ENCODE measurements at regions of chr6 and their contacts with region 1.

Region 1: GRCh38 chr6:57316581-57317059 is 810 bp upstream of the PRIM2 start:
- DNase-seq: peak; percentile 23 to 93
- H3K4me3 ChIP-seq: peak overlapping the region; percentile 58 to 70
- H3K27ac ChIP-seq: peak overlapping the region; percentile 49 to 89
- H3K4me1 ChIP-seq: peaks cover 3 to 25% of the 10 kb centered on the region in 2 donors
- H3K27me3 ChIP-seq: no peaks in the 10 kb centered on the region
- CTCF ChIP-seq: peak; percentile 61 to 84 (median 82)

Region 2: DNA sequence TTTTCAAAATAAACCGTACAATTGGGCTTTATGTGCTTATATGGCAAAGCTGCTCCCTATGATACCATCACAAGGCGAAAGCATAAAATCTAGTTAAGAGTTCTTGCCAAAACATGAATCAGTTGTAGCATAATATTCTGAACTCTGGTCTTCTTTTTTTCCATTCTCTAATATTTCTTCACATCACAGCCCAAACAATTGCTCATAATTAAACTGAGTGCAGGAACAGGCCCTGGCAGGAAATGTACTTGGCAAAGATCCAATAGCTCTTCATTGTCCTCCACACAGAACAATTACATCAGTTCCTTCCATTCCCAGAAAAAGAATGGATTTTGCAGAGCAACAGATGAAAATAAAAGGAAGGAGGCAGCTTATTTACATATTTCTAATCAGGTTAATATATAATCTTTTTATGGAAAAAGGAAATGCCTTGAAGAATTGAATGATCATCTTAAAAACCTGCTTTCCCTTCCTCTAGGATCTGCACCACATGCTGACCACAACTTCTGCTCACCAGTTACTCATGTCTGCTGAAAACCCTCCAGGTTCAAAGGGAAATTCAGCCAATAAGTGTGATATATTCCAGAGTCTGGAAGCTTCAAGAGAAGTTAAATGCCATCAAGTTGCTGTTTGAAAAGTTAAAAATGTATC is 945.9 kb before region 1 on chr6:
- intact Hi-C with region 1: loop called (anchors 5 kb)
- DNase-seq: peak in 1 of 2 donors; percentile 84
- H3K4me3 ChIP-seq: peak overlapping the region in 1 of 2 donors; percentile 51
- H3K27ac ChIP-seq: peak overlapping the region; percentile 83 to 93
- H3K4me1 ChIP-seq: peaks cover 6 to 58% of the 10 kb centered on the region in 2 donors
- H3K27me3 ChIP-seq: no peaks in the 10 kb centered on the region
- CTCF ChIP-seq: no peak

Region 3: GRCh38 chr6:56902641-56903464 is 413.8 kb before region 1 on chr6:
- intact Hi-C with region 1: loop called (anchors 2 kb)
- DNase-seq: no peak
- H3K4me3 ChIP-seq: no peak overlapping the region
- H3K27ac ChIP-seq: no peak overlapping the region
- H3K4me1 ChIP-seq: no peaks in the 10 kb centered on the region
- H3K27me3 ChIP-seq: no peaks in the 10 kb centered on the region
- CTCF ChIP-seq: peak in 2 of 3 experiments; percentile 72 to 78

Region 4: GRCh38 chr6:57048577-57048976 is 268.0 kb before region 1 on chr6:
- intact Hi-C with region 1: loop called (anchors 1 kb)
- DNase-seq: no peak
- H3K4me3 ChIP-seq: no peak overlapping the region
- H3K27ac ChIP-seq: no peak overlapping the region
- H3K4me1 ChIP-seq: peaks cover 0 to 12% of the 10 kb centered on the region in 2 donors
- H3K27me3 ChIP-seq: no peaks in the 10 kb centered on the region
- CTCF ChIP-seq: no peak

Region 5: GRCh38 chr6:57172136-57173055 is 144.2 kb before region 1 on chr6 and contains the start of gene BAG2:
- intact Hi-C with region 1: loop called (anchors 1 kb)
- DNase-seq: peak; percentile 78 to 96
- H3K4me3 ChIP-seq: peak within 1 kb of the TSS; percentile 72 to 79
- H3K27ac ChIP-seq: peak within 1 kb of the TSS; percentile 91 to 95
- H3K4me1 ChIP-seq: peaks cover 0 to 28% of the 10 kb centered on the region in 2 donors
- H3K27me3 ChIP-seq: no peaks in the 10 kb centered on the region
- CTCF ChIP-seq: peak; percentile 9 to 26 (median 22)
- total RNA-seq, gene BAG2: 7.7 TPM

Region 6: DNA sequence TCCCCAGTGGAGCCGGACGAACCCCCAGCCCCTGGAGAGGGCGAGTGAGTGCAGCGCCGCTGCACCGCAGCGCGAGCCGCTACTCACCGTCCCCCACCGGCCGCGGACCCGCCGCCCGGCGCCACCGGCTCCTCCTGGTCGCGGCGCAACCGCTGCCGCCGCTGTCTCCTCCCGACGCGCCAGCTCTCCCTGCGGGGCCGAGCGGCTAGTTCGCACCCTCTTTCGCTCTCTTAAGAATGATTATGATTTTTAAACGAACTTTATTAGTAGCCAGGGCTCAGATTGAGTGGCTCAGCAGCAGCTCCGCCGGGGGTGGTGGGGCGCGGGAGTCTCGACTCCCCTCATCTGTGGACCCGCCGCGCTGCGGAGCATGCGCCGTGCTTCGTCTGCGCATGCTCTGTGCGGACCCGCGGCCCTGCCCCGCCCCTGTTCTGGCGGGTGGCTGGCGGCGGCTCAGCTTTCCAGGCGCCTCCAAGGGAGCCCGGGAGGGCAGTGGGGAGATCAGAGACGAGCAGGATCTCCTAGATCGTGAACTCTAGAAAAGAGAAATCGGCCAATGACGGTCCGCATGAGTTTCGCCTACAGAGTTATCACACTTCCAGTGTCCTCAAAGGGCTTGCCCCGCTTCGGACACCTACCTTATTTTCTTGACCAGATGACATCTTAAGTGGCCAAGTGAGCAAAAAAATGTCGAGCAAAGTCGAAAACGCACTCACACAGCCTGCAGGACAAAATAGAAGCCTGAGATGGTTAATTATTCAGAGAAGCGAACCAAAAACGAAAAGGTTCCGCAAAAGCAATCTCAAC is 94.5 kb before region 1 on chr6 and contains the start of gene RAB23:
- intact Hi-C with region 1: loop called (anchors 1 kb)
- DNase-seq: peak; percentile 16 to 89
- H3K4me3 ChIP-seq: peak within 1 kb of the TSS; percentile 72 to 88
- H3K27ac ChIP-seq: peak within 1 kb of the TSS; percentile 93 to 96
- H3K4me1 ChIP-seq: peaks cover 0 to 6% of the 10 kb centered on the region in 2 donors
- H3K27me3 ChIP-seq: no peaks in the 10 kb centered on the region
- CTCF ChIP-seq: no peak
- total RNA-seq, gene RAB23: 19.9 TPM

Measured in ascending aorta (tissue), 2 donors.